B cell (primary cell): ENCODE measurements at regions of chr6 and their contacts with region 1.

Region 1: GRCh38 chr6:21593412-21593926 is at the start of gene SOX4:
- DNase-seq: peak; percentile 91
- ATAC-seq: peak; percentile 84
- H3K4me3 ChIP-seq: peak within 1 kb of the TSS; percentile 66 to 82 (median 71)
- H3K4me3 Mint-ChIP-seq: no peak within 1 kb of the TSS
- H3K27ac ChIP-seq: peak within 1 kb of the TSS; percentile 50 to 62
- H3K27ac Mint-ChIP-seq: peak within 1 kb of the TSS; percentile 96
- H3K4me1 ChIP-seq: peaks cover 23 to 31% of the 10 kb centered on the region in 2 donors
- H3K4me1 Mint-ChIP-seq: peaks cover 23% of the 10 kb centered on the region
- H3K27me3 ChIP-seq: peaks cover 0 to 8% (median 0%) of the 10 kb centered on the region in 4 experiments
- H3K27me3 Mint-ChIP-seq: peaks cover 10% of the 10 kb centered on the region
- CTCF ChIP-seq: no peak
- total RNA-seq, gene SOX4: 5.0 and 5.4 TPM in 2 replicates

Region 2: DNA sequence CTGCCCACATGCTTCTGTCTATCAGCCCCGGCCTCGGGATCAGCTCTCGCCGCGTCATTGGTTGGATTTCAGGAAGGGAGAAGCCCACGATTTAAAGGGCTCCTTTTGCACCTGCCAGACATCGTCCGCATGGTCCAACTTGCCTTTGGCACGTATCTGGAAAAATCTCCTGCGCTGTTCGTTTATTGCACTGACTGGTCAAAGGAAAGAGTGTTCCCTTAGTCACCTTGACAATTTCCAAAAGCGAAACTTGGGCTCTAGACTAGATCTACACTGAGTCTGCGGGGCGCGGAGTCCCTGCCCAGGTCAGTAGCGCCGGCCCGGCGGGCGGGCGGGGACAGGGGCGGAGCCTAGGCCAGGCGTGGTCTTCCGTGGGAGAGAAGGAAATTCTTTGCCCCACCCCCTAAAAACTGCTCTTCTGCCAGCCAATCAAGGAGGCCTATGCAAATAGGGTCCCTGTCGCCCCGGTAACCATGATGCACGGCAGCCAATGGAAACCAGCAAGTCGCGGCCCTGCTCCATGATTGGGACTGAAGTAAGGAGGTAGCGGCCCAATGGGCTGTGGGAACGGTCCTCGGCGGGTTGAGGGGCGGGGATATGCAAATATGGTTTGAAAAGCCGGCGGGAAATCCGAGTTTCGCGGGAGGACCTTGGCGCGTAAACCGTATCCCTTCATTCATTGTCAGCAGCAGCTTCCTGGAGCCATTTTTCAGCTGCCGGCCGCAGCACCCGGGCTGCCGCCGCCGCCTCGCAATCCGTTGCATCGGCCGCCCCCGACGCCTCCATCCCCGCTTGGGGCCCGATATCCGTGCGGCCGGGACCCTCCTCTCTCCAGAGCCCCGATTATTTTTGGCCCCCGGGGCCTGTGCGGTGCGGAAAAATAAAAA is 1192.0 kb before region 1 on chr6 and contains the start of gene E2F3:
- CTCF ChIA-PET with region 1: interaction called, 3 read pairs
- POLR2A ChIA-PET with region 1: interaction called, 4 read pairs
- intact Hi-C with region 1: loop called (anchors 2 kb)
- DNase-seq: peak; percentile 99
- ATAC-seq: peak; percentile 81
- H3K4me3 ChIP-seq: peak within 1 kb of the TSS; percentile 71 to 92 (median 79)
- H3K4me3 Mint-ChIP-seq: peak within 1 kb of the TSS; percentile 94
- H3K27ac ChIP-seq: peak within 1 kb of the TSS; percentile 63 to 95
- H3K27ac Mint-ChIP-seq: peak within 1 kb of the TSS; percentile 90
- H3K4me1 ChIP-seq: peaks cover 14 to 17% of the 10 kb centered on the region in 2 donors
- H3K4me1 Mint-ChIP-seq: peaks cover 21% of the 10 kb centered on the region
- H3K27me3 ChIP-seq: no peaks in the 10 kb centered on the region
- H3K27me3 Mint-ChIP-seq: no peaks in the 10 kb centered on the region
- CTCF ChIP-seq: no peak
- total RNA-seq, gene E2F3: 7.3 and 8.3 TPM in 2 replicates

Region 3: GRCh38 chr6:20564269-20564668 is 1029.2 kb before region 1 on chr6:
- CTCF ChIA-PET with region 1: interaction called, 106 read pairs
- POLR2A ChIA-PET with region 1: interaction called, 6 read pairs
- intact Hi-C with region 1: loop called (anchors 1 kb)
- DNase-seq: peak; percentile 49
- ATAC-seq: no peak
- H3K4me3 ChIP-seq: no peak overlapping the region
- H3K4me3 Mint-ChIP-seq: no peak overlapping the region
- H3K27ac ChIP-seq: no peak overlapping the region
- H3K27ac Mint-ChIP-seq: no peak overlapping the region
- H3K4me1 ChIP-seq: peaks cover 4 to 5% of the 10 kb centered on the region in 2 donors
- H3K4me1 Mint-ChIP-seq: peaks cover 3% of the 10 kb centered on the region
- H3K27me3 ChIP-seq: no peaks in the 10 kb centered on the region
- H3K27me3 Mint-ChIP-seq: no peaks in the 10 kb centered on the region
- CTCF ChIP-seq: peak; percentile 89

Region 4: GRCh38 chr6:20875369-20875963 is 718.0 kb before region 1 on chr6:
- CTCF ChIA-PET with region 1: interaction called, 3 read pairs
- POLR2A ChIA-PET with region 1: no interaction called
- intact Hi-C with region 1: loop called (anchors 2 kb)
- DNase-seq: peak; percentile 16
- ATAC-seq: no peak
- H3K4me3 ChIP-seq: no peak overlapping the region
- H3K4me3 Mint-ChIP-seq: no peak overlapping the region
- H3K27ac ChIP-seq: no peak overlapping the region
- H3K27ac Mint-ChIP-seq: no peak overlapping the region
- H3K4me1 ChIP-seq: no peaks in the 10 kb centered on the region
- H3K4me1 Mint-ChIP-seq: peaks cover 3% of the 10 kb centered on the region
- H3K27me3 ChIP-seq: no peaks in the 10 kb centered on the region
- H3K27me3 Mint-ChIP-seq: no peaks in the 10 kb centered on the region
- CTCF ChIP-seq: no peak